HCT116 (cell line): ENCODE measurements at regions of chr6 and their contacts with region 1.

Region 1: DNA sequence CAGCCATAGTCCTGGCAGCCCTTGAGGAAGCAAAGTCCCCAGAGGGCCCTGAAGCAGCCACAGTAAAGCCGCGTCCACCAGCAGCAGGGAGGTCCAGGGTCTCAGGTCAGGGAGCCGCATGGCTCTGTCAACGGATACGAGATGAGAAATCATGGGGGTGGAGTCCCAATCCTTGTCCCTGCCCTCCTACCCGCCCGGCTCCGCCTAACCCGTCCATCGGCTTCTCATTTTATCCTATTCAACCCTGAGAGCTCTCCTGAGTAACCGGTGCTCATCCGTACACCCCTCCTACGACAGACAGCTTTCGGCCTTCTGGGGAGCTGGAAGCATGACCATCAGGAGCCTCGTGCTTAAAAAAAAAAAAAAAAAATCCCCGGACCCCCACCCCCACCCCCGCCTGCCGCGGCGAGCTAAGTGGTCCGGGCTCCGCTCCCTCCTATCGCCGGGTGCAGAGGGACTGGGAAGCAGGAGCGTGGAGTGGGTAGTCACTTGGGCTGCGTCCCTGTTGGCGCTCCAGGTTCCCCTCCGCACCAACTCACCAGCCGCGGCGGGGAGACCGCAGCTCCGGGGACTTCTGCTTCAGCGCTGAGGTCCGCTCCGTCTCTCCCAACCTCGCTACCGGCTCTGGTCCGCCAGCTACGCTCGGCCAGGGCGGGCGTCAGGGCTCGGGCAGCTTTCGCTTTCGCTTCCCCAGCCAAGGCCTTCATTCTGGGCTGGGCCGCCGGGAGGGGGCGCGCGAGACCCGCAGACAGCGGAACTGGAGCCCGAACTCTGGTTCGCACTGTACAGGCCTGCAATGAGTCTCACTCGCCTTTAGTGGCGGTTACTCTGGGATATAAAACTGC is at the start of gene TAP2:
- DNase-seq: peak; percentile 79
- ATAC-seq: peak; percentile 92
- H3K4me3 ChIP-seq: peak within 1 kb of the TSS; percentile 83 to 84
- H3K27ac ChIP-seq: peak within 1 kb of the TSS; percentile 81
- H3K4me1 ChIP-seq: peaks cover 6 to 20% of the 10 kb centered on the region in 2 experiments; a peak in 3 of 4 replicates
- H3K27me3 ChIP-seq: no peaks in the 10 kb centered on the region
- CTCF ChIP-seq: peak; percentile 88 to 96 (median 91)
- POLR2A ChIP-seq: peak; percentile 84
- RAD21 ChIP-seq: peak; percentile 97
- total RNA-seq, gene TAP2: 59.9 TPM

Region 2: DNA sequence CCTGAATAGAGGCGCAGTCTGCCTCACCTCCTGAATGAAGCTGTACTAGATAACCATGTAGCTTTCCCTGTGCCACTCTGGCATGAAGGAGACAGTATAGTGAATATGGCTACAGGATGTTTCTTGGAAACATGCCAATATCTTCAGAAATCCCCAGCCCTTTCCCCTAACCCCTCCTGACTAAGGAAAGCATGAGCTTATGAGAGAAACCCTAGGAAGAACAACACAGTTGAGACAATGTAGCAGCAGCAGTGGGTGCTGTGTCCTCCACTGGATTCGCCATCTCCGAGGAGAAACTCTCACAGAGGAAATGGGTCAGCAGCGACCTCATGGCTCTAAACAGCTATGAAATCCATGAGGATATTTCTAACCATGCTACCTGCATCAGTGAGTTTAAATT is 194.4 kb before region 1 on chr6:
- CTCF ChIA-PET with region 1: no interaction called
- POLR2A ChIA-PET with region 1: no interaction called
- RAD21 ChIA-PET with region 1: no interaction called
- intact Hi-C with region 1: no loop called
- DNase-seq: no peak
- ATAC-seq: no peak
- H3K4me3 ChIP-seq: no peak overlapping the region
- H3K27ac ChIP-seq: no peak overlapping the region
- H3K4me1 ChIP-seq: no peaks in the 10 kb centered on the region
- H3K27me3 ChIP-seq: no peaks in the 10 kb centered on the region
- CTCF ChIP-seq: no peak
- POLR2A ChIP-seq: no peak
- RAD21 ChIP-seq: no peak

Region 3: GRCh38 chr6:32825966-32826365 is 12.4 kb before region 1 on chr6:
- CTCF ChIA-PET with region 1: interaction called, 41 read pairs
- POLR2A ChIA-PET with region 1: interaction called, 10 read pairs
- RAD21 ChIA-PET with region 1: interaction called in 1 of 2 experiments, 3 read pairs
- intact Hi-C with region 1: no loop called
- DNase-seq: no peak
- ATAC-seq: peak; percentile 52
- H3K4me3 ChIP-seq: no peak overlapping the region
- H3K27ac ChIP-seq: no peak overlapping the region
- H3K4me1 ChIP-seq: no peaks in the 10 kb centered on the region
- H3K27me3 ChIP-seq: no peaks in the 10 kb centered on the region
- CTCF ChIP-seq: peak; percentile 27 to 44 (median 34); a peak in 4 of 6 replicates
- POLR2A ChIP-seq: no peak
- RAD21 ChIP-seq: peak; percentile 71

Region 4: GRCh38 chr6:32862725-32863124 is 24.4 kb after region 1 on chr6:
- CTCF ChIA-PET with region 1: interaction called, 189 read pairs
- POLR2A ChIA-PET with region 1: interaction called, 23 read pairs
- RAD21 ChIA-PET with region 1: interaction called, 34 to 36 read pairs
- intact Hi-C with region 1: no loop called
- DNase-seq: no peak
- ATAC-seq: no peak
- H3K4me3 ChIP-seq: no peak overlapping the region
- H3K27ac ChIP-seq: no peak overlapping the region
- H3K4me1 ChIP-seq: peaks cover 2 to 17% of the 10 kb centered on the region in 2 experiments; a peak in 3 of 4 replicates
- H3K27me3 ChIP-seq: no peaks in the 10 kb centered on the region
- CTCF ChIP-seq: no peak
- POLR2A ChIP-seq: no peak
- RAD21 ChIP-seq: no peak

Region 5: DNA sequence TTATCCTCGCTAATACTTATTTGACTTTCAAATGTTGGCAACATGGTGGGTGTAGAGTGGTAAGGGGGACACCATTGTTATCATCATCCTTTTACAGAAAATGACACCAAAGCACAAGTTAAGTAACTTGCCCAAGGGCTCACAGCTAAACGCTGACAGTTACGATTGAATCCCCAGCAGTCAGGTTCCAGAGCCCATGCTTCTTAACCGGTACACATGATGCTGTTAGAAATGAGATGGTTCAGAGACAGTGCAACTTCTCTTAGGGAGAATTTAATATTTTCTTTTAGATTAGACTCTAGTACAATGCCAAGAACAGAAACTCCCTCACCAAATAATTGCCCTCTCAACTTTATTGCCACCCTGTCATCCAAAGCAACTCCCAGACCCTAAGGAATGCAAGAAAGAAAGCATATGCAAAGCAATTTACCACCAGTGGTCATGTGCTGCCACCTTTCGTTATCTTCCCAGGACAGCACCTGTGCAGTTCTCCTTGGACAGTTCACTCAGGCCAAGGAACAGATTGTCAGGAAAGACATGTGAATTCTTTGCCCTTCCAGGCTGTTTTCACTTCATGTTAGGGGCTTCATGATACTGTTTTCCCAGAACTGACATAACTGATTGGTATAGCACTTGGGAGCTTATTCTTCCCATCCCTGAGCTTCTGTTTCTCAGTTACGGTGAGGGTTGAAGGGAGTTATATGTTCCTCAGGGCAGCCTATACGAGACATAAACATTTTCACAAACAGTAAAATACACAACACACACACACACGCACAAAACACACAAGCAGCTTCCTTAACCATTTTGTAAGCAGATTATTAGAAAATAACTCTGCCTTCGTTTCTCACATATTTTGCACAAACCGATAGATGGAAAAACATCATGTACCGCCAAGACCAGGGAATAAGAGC is 109.5 kb after region 1 on chr6:
- CTCF ChIA-PET with region 1: interaction called, 16 read pairs
- POLR2A ChIA-PET with region 1: no interaction called
- RAD21 ChIA-PET with region 1: no interaction called
- intact Hi-C with region 1: loop called (anchors 5 kb)
- DNase-seq: peak; percentile 48
- ATAC-seq: peak; percentile 94
- H3K4me3 ChIP-seq: no peak overlapping the region
- H3K27ac ChIP-seq: no peak overlapping the region
- H3K4me1 ChIP-seq: peaks cover 0 to 4% of the 10 kb centered on the region in 2 experiments; a peak in 2 of 4 replicates
- H3K27me3 ChIP-seq: no peaks in the 10 kb centered on the region
- CTCF ChIP-seq: peak; percentile 64 to 78 (median 70)
- POLR2A ChIP-seq: no peak
- RAD21 ChIP-seq: peak; percentile 89

Region 6: DNA sequence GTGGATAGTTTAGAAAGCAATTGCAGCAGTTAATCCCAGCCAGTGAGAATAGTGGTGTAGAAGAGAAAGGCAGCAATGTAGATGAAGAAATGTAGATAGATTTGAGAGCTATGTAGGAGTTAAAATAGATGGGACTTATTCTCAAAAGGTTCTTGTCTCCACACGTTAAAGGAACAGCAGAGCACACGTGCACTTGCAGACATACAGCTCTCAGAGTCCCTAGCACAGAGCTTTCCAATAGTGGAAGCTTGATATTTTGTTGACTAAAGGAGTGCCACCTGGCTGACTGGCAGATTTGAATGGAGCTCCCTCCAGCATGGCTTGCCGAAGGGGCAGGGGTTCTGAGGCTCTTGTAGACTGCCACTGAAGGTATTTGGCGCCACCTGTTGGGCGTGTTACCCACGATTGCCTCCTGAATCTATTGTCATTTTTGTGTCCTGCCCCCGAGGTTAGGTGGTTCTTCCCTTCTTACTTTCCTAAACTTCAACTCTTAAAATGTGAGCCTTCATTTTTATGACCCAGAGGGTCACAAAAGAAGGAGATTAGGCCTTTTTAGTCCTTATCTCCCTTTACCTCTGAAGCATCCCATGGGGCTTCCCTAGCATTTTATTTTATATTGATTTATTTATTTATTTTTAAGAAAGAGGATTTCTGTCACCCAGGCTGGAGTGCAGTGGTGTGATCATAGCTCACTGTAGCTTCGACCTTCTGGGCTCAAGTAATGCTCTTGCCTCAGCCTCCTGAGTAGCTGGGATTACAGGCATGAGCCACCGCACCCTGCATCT is 146.5 kb after region 1 on chr6:
- CTCF ChIA-PET with region 1: interaction called, 19 read pairs
- POLR2A ChIA-PET with region 1: interaction called, 4 read pairs
- RAD21 ChIA-PET with region 1: interaction called in 1 of 2 experiments, 4 read pairs
- intact Hi-C with region 1: no loop called
- DNase-seq: peak; percentile 77
- ATAC-seq: peak; percentile 81
- H3K4me3 ChIP-seq: no peak overlapping the region
- H3K27ac ChIP-seq: no peak overlapping the region
- H3K4me1 ChIP-seq: no peaks in the 10 kb centered on the region
- H3K27me3 ChIP-seq: no peaks in the 10 kb centered on the region
- CTCF ChIP-seq: peak; percentile 84 to 95 (median 90)
- POLR2A ChIP-seq: no peak
- RAD21 ChIP-seq: peak; percentile 98

Region 7: GRCh38 chr6:33147807-33148666 is 309.7 kb after region 1 on chr6:
- CTCF ChIA-PET with region 1: no interaction called
- POLR2A ChIA-PET with region 1: no interaction called
- RAD21 ChIA-PET with region 1: no interaction called
- intact Hi-C with region 1: no loop called
- DNase-seq: peak; percentile 54
- ATAC-seq: peak; percentile 75
- H3K4me3 ChIP-seq: no peak overlapping the region
- H3K27ac ChIP-seq: no peak overlapping the region
- H3K4me1 ChIP-seq: 0 out of 4 replicates have a peak, but pooled peaks cover 0 to 6% of the 10 kb centered on the region in 2 experiments
- H3K27me3 ChIP-seq: no peaks in the 10 kb centered on the region
- CTCF ChIP-seq: peak; percentile 78 to 85 (median 79)
- POLR2A ChIP-seq: no peak
- RAD21 ChIP-seq: peak; percentile 71

Region 8: GRCh38 chr6:33547499-33547898 is 709.2 kb after region 1 on chr6:
- CTCF ChIA-PET with region 1: no interaction called
- POLR2A ChIA-PET with region 1: no interaction called
- RAD21 ChIA-PET with region 1: no interaction called
- intact Hi-C with region 1: no loop called
- DNase-seq: no peak
- ATAC-seq: no peak
- H3K4me3 ChIP-seq: no peak overlapping the region
- H3K27ac ChIP-seq: no peak overlapping the region
- H3K4me1 ChIP-seq: no peaks in the 10 kb centered on the region
- H3K27me3 ChIP-seq: no peaks in the 10 kb centered on the region
- CTCF ChIP-seq: no peak
- POLR2A ChIP-seq: no peak
- RAD21 ChIP-seq: no peak